ENCODE measurements at regions of chr16 and their contacts with region 1.

Region 1: GRCh38 chr16:66315210-66315825 is 51.2 kb upstream of the CDH5 start:
- H3K4me3 Mint-ChIP-seq: no peak overlapping the region
- H3K27ac Mint-ChIP-seq: no peak overlapping the region
- H3K4me1 Mint-ChIP-seq: no peaks in the 10 kb centered on the region
- H3K27me3 Mint-ChIP-seq: peaks cover 2% of the 10 kb centered on the region

Region 2: DNA sequence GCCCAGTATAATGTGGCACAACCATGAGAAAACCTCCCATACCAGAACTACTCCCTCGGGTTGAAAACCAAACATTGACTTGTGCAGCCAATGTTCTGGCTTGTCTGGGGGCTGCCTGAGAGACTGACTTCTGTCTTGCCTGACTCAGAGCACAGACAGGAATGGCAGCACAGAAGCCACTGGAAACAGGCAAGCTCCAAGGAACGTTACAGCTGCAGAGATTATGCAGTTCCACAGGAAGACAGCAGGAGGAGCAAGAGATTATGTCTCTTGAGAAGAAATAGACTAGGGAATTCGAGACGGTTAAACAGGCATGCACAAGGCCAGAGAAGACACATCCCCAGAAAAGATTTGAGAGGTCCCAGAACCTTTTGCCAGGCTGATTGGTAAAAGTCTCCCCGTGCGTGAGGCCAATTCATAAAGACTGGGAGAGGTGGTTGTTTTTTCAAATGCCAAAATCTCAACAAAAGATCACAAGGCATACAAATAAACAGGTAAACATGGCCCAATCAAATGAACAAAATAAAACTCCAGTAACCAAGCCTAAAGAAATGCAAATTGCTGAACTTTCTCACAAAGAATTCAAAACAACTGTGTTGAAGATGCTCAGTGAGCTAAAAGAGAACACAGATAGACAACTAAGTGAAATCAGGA is 39.4 kb before region 1 on chr16:
- intact Hi-C with region 1: loop called (anchors 1 kb)
- H3K4me3 Mint-ChIP-seq: no peak overlapping the region
- H3K27ac Mint-ChIP-seq: no peak overlapping the region
- H3K4me1 Mint-ChIP-seq: no peaks in the 10 kb centered on the region
- H3K27me3 Mint-ChIP-seq: peaks cover 34% of the 10 kb centered on the region